ENCODE measurements at regions of chr11 and their contacts with region 1.

Region 1: DNA sequence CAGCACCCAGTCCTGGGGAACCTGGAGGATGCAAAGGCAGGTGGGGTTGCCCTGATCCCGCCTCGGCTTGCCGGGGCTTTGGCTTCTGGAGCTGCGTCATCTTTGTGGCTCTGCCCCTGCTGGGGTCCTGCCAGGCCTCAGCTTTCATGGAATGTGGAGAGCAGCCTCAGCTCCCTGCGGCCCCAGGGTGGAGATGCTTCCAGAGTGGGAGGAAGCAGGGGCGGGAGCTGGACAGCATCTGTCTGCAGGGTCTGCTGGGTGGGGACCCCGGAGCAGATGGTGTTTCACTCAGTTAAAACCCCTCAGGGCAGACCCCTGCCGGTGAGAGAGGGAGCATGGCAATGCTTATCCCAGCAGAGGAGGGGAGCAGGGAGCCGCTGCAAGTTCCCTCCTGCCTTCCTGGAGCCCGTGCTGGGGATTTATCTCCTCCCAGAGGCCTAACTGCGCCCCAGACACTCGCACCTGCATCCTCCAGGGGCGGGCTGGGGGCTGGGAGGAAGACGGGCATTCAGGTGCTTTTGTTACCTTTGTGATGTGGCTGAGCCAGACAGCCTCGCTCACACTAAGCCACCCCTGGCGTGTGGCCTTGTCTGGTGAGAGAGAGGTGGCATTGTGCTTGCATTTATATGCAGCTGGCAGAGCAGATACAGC is 15.7 kb downstream of the GRIK4 start:
- DNase-seq: peak in 1 of 2 experiments; percentile 42
- H3K4me3 ChIP-seq: no peak overlapping the region
- H3K4me3 Mint-ChIP-seq: no peak overlapping the region
- H3K27ac Mint-ChIP-seq: peak overlapping the region; percentile 56
- H3K4me1 ChIP-seq: peaks cover 43% of the 10 kb centered on the region
- H3K4me1 Mint-ChIP-seq: peaks cover 49% of the 10 kb centered on the region
- H3K27me3 ChIP-seq: no peaks in the 10 kb centered on the region
- H3K27me3 Mint-ChIP-seq: no peaks in the 10 kb centered on the region
- CTCF ChIP-seq: no peak

Region 2: GRCh38 chr11:120441592-120441991 is 85.6 kb before region 1 on chr11:
- CTCF ChIA-PET with region 1: no interaction called
- POLR2A ChIA-PET with region 1: no interaction called
- intact Hi-C with region 1: no loop called
- DNase-seq: no peak
- H3K4me3 ChIP-seq: no peak overlapping the region
- H3K4me3 Mint-ChIP-seq: no peak overlapping the region
- H3K27ac Mint-ChIP-seq: no peak overlapping the region
- H3K4me1 ChIP-seq: no peaks in the 10 kb centered on the region
- H3K4me1 Mint-ChIP-seq: peaks cover 7% of the 10 kb centered on the region
- H3K27me3 ChIP-seq: no peaks in the 10 kb centered on the region
- H3K27me3 Mint-ChIP-seq: no peaks in the 10 kb centered on the region
- CTCF ChIP-seq: no peak

Region 3: GRCh38 chr11:120612513-120613263 is 85.5 kb after region 1 on chr11:
- CTCF ChIA-PET with region 1: no interaction called
- POLR2A ChIA-PET with region 1: no interaction called
- intact Hi-C with region 1: loop called (anchors 5 kb)
- DNase-seq: peak; percentile 44 to 69
- H3K4me3 ChIP-seq: no peak overlapping the region
- H3K4me3 Mint-ChIP-seq: peak overlapping the region; percentile 12
- H3K27ac Mint-ChIP-seq: peak overlapping the region; percentile 72
- H3K4me1 ChIP-seq: peaks cover 19% of the 10 kb centered on the region
- H3K4me1 Mint-ChIP-seq: peaks cover 31% of the 10 kb centered on the region
- H3K27me3 ChIP-seq: no peaks in the 10 kb centered on the region
- H3K27me3 Mint-ChIP-seq: no peaks in the 10 kb centered on the region
- CTCF ChIP-seq: no peak

Region 4: GRCh38 chr11:120674542-120674941 is 147.3 kb after region 1 on chr11:
- CTCF ChIA-PET with region 1: interaction called, 5 read pairs
- POLR2A ChIA-PET with region 1: no interaction called
- intact Hi-C with region 1: loop called (anchors 5 kb)
- DNase-seq: peak; percentile 83 to 92
- H3K4me3 ChIP-seq: no peak overlapping the region
- H3K4me3 Mint-ChIP-seq: no peak overlapping the region
- H3K27ac Mint-ChIP-seq: peak overlapping the region; percentile 10
- H3K4me1 ChIP-seq: peaks cover 37% of the 10 kb centered on the region
- H3K4me1 Mint-ChIP-seq: peaks cover 18% of the 10 kb centered on the region
- H3K27me3 ChIP-seq: no peaks in the 10 kb centered on the region
- H3K27me3 Mint-ChIP-seq: no peaks in the 10 kb centered on the region
- CTCF ChIP-seq: no peak

Measured in Caco-2 (cell line).